ENCODE measurements at regions of chr5 and their contacts with region 1.

Region 1: GRCh38 chr5:112885001-112885400 is 23.9 kb downstream of the SRP19 start:
- DNase-seq: no peak
- H3K4me3 ChIP-seq: no peak overlapping the region
- H3K27ac ChIP-seq: no peak overlapping the region
- H3K4me1 ChIP-seq: no peaks in the 10 kb centered on the region
- H3K27me3 ChIP-seq: no peaks in the 10 kb centered on the region
- CTCF ChIP-seq: no peak
- EP300 ChIP-seq: no peak
- POLR2A ChIP-seq: no peak

Region 2: GRCh38 chr5:112635771-112636731 is 248.9 kb before region 1 on chr5:
- intact Hi-C with region 1: no loop called
- DNase-seq: no peak
- H3K4me3 ChIP-seq: no peak overlapping the region
- H3K27ac ChIP-seq: no peak overlapping the region
- H3K4me1 ChIP-seq: no peaks in the 10 kb centered on the region
- H3K27me3 ChIP-seq: no peaks in the 10 kb centered on the region
- CTCF ChIP-seq: no peak
- EP300 ChIP-seq: no peak
- POLR2A ChIP-seq: no peak

Region 3: GRCh38 chr5:112866739-112867138 is 18.3 kb before region 1 on chr5:
- intact Hi-C with region 1: loop called in 1 of 4 experiments (anchors 2 kb)
- DNase-seq: no peak
- H3K4me3 ChIP-seq: no peak overlapping the region
- H3K27ac ChIP-seq: no peak overlapping the region
- H3K4me1 ChIP-seq: peaks cover 6% of the 10 kb centered on the region
- H3K27me3 ChIP-seq: no peaks in the 10 kb centered on the region
- CTCF ChIP-seq: no peak
- EP300 ChIP-seq: no peak
- POLR2A ChIP-seq: no peak